ENCODE measurements at regions of chr7 and their contacts with region 1.

Region 1: DNA sequence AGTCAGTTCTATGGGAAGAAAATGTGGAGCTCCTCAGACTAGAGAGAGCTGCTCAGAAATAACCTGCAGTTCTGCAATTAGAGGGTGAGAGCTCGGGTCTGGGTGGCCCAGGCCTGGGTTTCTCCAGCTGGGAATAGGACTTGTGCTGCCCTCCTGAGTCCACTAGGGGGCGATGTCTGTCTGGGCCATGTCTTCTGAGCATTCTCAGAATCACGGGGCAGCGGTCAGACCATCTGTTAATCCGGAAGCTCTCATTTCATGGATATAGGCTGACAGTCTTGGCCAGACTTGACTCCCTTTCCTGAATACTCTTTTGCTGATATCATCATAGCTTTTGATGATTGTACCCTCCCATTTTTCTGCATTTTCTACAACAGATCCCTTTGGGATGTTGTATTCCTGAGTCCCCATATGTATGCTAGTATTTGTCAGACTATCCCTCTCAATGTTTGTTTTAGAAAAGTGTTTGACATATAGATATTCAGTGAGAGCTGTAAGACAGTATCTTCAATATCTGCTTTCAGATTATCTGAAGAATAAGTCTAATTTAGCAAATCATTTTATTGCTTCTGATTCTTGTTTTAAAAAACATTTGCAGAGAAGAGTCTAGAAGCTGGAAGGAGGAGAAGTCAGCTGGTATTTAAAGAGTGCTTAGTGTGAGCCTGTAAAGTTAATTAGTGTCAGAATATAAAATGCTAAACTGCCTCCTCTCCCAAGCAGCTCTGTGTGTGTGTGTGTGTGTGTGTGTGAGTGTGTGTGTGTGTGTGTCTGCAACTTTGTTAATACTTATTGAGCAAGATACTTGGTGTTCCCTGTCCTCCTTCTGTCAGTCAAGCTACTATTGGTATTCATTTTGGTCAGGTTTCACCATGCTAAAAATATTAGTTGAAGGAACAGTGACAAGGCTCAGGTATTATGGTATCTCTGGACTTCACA is 38.0 kb downstream of the STARD3NL start:
- DNase-seq: peak; percentile 79
- CTCF ChIP-seq: peak; percentile 86

Region 2: DNA sequence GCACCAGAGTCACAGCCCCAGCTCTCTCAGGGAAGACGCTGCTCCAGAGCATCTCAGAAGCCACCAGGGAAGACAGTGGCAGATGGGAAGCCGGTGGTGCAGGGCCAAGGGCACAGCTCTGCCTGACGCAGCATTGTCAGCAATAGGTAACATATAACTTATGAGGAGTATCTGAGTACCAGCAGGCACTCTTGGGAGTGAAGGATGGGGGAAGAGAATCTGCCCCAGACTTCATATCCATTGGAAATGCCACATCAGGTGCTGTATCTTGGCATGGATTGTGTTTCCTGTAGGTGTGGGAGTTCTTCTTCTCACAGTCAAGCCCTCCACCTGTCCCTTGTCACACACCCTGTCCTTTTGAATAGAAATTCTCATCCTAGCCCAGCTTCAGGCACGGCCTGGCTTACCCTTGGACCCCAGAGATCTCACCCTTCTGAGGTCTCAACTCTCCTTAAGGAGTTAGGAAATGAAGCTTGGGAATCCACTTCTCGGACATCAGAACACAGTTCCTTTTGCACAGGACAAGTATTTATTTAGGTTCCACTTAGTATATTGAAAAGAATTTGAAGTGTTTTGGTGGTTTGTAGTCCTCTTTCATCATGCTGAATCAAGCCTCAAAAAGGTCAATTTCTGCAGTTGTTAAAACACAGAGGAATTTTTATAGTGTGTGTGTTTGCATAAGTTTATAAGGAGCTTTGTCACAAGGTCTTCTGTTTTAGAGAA is 285.6 kb before region 1 on chr7:
- CTCF ChIA-PET with region 1: no interaction called
- POLR2A ChIA-PET with region 1: no interaction called
- DNase-seq: no peak
- CTCF ChIP-seq: no peak

Region 3: GRCh38 chr7:38034062-38034907 is 181.7 kb before region 1 on chr7:
- CTCF ChIA-PET with region 1: no interaction called
- POLR2A ChIA-PET with region 1: no interaction called
- DNase-seq: no peak
- CTCF ChIP-seq: no peak

Region 4: DNA sequence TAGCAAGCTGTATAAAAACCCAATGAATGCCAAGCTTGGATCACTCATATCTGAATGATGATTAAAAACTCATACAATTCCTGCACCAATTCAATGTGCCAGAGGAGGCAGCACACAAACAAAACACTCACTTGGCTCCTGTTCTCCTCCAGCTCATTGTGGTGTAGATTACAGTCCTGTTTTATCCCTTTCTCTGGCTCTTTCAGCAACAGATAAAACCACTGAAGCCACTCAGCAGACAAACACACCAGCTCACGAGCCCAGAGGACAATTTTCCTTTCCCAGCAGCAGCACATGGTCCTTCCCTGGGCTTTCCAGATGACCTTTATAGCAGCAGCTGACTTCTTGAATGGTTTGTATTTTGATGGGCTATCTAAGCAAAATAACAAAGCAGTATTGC is 145.3 kb before region 1 on chr7:
- CTCF ChIA-PET with region 1: no interaction called
- POLR2A ChIA-PET with region 1: no interaction called
- DNase-seq: no peak
- CTCF ChIP-seq: no peak

Region 5: GRCh38 chr7:38154278-38154677 is 61.7 kb before region 1 on chr7:
- CTCF ChIA-PET with region 1: interaction called, 10 read pairs
- POLR2A ChIA-PET with region 1: no interaction called
- DNase-seq: no peak
- CTCF ChIP-seq: no peak

Region 6: DNA sequence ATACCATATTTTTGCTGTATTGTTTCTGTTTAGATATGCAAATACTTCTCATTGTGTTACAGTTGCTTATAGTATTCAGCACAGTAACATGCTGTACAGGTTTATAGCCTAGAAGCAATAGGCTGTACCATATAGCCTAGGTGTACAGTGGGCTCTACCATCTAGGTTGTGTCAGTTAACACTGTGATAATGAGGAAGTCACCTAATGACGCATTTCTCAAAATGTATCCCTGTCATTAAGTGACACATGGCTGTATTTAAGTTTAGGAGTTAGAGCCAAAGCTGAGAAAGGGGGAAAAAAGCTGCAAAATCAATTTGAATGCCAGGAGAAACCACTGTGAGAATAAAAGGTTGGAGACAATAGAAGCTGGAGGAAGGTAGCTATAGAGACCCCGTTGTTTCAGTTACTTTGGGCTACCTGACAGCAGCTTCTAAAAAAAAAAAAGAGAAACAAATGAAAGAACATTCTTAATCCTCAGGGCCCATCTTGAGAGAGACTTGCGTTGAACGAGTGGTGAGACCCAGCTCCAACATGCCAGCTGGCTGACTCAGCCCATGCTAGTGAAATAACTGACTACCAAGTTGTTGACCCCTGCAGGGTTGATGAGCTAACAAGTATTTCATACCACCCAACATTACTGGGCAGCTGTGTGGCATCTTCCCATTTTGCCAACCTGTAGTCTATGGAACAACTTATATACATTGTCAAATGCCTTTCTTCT is 29.2 kb before region 1 on chr7:
- CTCF ChIA-PET with region 1: interaction called, 40 read pairs
- POLR2A ChIA-PET with region 1: no interaction called
- DNase-seq: no peak
- CTCF ChIP-seq: no peak

Region 7: GRCh38 chr7:38312821-38313220 is 96.8 kb after region 1 on chr7:
- CTCF ChIA-PET with region 1: interaction called, 31 read pairs
- POLR2A ChIA-PET with region 1: no interaction called
- DNase-seq: no peak
- CTCF ChIP-seq: no peak

Region 8: GRCh38 chr7:38360776-38361175 is 144.8 kb after region 1 on chr7:
- CTCF ChIA-PET with region 1: interaction called, 103 read pairs
- POLR2A ChIA-PET with region 1: no interaction called
- DNase-seq: no peak
- CTCF ChIP-seq: no peak

Region 9: GRCh38 chr7:38916396-38916795 is 700.4 kb after region 1 on chr7:
- CTCF ChIA-PET with region 1: no interaction called
- POLR2A ChIA-PET with region 1: no interaction called
- DNase-seq: no peak
- CTCF ChIP-seq: no peak

Measured in GM10248 (cell line).